OCI-LY7 (cell line): ENCODE measurements at regions of chr14 and their contacts with region 1.

Region 1: GRCh38 chr14:49461529-49462401 is 124.4 kb downstream of the RPS29 start:
- DNase-seq: peak; percentile 83
- H3K4me3 ChIP-seq: no peak overlapping the region
- H3K27ac ChIP-seq: no peak overlapping the region
- H3K4me1 ChIP-seq: no peaks in the 10 kb centered on the region
- CTCF ChIP-seq: peak; percentile 94

Region 2: DNA sequence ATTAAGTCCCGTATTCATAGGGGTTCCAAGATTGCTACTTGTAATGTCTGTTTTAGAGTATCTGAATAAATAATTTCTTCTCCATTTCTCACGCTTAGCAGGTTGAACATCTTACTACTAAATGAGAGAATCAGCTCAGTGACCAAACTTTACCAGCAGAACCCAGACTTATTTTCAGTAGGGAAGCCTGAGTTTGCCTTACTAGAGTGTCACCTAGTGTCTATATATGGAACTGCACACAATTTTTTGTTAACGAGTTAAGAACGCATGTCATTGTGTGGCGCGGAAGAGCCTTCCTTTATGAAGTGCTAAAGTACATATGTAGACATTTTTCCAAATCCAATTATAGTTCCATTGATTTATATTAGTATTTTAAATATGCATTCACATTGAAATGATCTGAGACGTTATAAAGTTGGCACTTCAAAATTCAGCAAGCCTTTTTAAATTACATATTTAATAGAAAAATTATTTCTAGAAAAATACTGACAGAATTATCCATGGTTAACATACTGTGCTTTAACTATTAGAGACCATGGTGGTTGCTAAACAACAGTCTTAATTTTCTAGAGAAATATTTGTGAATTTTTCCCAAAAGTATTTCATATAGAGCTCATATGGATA is 36.1 kb after region 1 on chr14:
- CTCF ChIA-PET with region 1: interaction called, 7 read pairs
- POLR2A ChIA-PET with region 1: no interaction called
- intact Hi-C with region 1: loop called (anchors 2 kb)
- DNase-seq: peak; percentile 78
- H3K4me3 ChIP-seq: no peak overlapping the region
- H3K27ac ChIP-seq: no peak overlapping the region
- H3K4me1 ChIP-seq: no peaks in the 10 kb centered on the region
- CTCF ChIP-seq: peak; percentile 94

Region 3: GRCh38 chr14:49828640-49829039 is 366.9 kb after region 1 on chr14:
- CTCF ChIA-PET with region 1: no interaction called
- POLR2A ChIA-PET with region 1: no interaction called
- intact Hi-C with region 1: loop called (anchors 5 kb)
- DNase-seq: no peak
- H3K4me3 ChIP-seq: no peak overlapping the region
- H3K27ac ChIP-seq: no peak overlapping the region
- H3K4me1 ChIP-seq: no peaks in the 10 kb centered on the region
- CTCF ChIP-seq: no peak